OCI-LY7 (cell line): ENCODE measurements at regions of chr22 and their contacts with region 1.

Region 1: DNA sequence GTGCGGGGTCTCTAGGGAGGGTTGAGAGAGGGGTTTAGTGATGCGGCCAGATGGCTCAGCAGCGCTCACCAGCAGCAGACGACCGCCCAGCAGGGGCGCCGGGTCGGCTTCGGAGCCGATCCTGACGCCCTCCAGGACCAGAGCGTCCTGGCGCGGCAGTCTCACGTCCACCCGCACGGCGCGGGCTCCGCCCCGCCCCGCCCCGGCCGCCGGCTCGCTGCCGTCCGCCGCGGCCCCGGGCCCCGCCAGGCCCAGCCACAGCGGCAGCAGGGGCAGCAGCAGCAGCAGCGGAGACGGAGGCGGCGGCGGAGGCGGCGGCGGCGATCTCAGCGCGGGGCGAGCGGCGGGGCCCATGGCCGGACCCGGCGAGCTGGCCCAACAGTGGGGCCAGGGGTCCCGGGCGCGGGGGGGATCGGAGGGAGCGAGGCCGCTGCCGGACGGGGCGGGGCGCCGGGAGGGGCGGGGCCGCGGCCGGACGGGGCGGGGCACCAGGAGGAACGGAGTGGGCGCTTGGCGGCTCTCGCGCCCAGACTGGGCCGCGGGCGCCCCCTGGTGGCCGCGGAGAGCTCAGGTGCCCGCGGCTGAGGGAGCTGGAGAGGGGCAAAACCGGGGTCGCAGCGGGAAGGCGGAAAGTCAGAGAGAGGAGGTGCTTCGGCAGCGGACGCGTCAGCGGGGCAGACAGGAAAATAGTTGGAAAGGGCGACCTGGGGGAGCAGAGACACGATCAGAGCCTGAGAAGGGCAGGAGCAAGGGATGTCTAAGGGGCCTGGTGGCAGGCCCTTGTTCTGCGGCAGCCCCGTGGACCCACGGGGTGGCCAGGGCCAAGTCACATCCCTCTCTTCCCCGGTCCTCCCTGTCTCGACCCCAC is at the start of gene RNF215:
- DNase-seq: peak; percentile 86
- H3K4me3 ChIP-seq: peak within 1 kb of the TSS; percentile 66
- H3K27ac ChIP-seq: no peak within 1 kb of the TSS
- H3K4me1 ChIP-seq: peaks cover 23% of the 10 kb centered on the region
- CTCF ChIP-seq: peak; percentile 82
- total RNA-seq, gene RNF215: 6.9 and 8.0 TPM in 2 replicates

Region 2: GRCh38 chr22:30114361-30114760 is 272.8 kb before region 1 on chr22:
- CTCF ChIA-PET with region 1: no interaction called
- POLR2A ChIA-PET with region 1: interaction called, 3 read pairs
- intact Hi-C with region 1: loop called (anchors 5 kb)
- DNase-seq: no peak
- H3K4me3 ChIP-seq: no peak overlapping the region
- H3K27ac ChIP-seq: no peak overlapping the region
- H3K4me1 ChIP-seq: no peaks in the 10 kb centered on the region
- CTCF ChIP-seq: no peak

Region 3: DNA sequence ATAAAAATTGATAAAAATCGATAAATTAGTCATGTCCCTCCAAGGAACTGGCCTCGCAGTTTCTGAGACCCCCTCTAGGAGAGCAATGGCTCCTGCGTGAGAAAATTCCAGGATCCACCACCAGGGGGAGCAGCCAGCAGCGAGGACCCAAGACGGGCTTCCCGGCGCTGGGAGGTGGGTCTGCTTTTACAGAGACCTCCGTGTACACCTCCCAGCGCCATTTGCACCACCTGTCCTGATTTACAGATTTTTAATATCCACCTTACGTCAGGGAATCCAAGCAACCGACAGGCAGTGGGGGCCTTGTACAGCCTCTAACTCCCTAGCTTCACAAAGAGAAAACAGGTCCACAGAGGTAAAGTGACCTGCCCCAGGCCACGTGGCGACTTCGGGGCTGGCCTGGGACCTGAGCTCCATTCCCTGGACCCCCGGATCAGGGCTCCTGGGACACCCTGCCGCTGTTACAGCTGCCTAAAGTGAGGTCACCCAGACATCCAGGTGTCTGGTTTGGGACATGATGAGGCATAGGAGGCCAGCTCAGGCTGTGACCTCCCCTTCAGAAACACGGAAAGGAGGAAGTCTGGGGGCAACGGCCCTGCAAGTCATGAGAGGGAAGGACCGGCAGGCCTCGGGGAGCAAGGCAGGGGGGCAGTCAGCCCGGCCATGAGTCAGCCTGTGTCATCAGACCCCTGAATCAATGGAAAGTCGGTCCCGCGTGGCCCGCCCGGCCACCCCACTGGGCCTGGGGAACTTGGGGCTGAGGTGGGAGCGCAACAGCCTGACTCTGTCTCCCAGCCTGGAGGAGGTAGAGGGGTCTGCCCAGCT is 124.1 kb before region 1 on chr22:
- CTCF ChIA-PET with region 1: interaction called, 6 read pairs
- POLR2A ChIA-PET with region 1: no interaction called
- intact Hi-C with region 1: loop called (anchors 1 kb)
- DNase-seq: peak; percentile 80
- H3K4me3 ChIP-seq: no peak overlapping the region
- H3K27ac ChIP-seq: no peak overlapping the region
- H3K4me1 ChIP-seq: peaks cover 20% of the 10 kb centered on the region
- CTCF ChIP-seq: peak; percentile 96

Region 4: DNA sequence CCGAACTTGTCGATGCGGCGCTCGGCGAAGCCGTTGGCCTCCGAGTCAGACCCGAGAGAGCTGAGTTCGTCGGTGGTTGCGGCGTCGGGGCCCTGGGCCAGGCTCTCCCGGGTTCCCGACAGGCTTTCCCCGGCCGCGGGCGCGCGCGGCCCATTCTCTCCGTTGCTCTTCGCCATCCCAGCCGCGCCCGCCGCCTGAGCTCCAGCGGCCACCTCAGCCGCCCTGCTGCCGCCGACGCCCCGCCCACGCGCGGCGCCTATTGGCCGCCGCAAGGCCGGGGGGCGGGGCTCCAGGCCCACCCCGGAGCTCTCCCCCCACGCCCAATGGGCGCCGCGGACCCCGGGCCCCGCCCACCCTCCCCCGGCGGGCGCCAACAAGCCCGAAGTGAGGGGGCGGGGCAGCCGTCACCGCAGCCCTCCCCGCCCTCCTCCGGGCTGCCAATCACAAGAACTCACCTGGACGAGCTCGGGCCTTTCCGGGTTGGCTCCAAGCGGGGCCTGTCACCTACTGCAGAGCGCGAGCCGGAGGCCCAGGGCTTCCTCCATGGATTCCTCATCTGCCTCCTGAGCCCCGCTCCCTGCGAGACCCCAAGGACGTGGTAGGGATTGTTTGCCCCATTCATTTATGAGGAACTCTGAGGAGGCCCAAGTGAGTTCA is 60.4 kb before region 1 on chr22 and contains the start of gene TBC1D10A:
- CTCF ChIA-PET with region 1: no interaction called
- POLR2A ChIA-PET with region 1: interaction called, 3 read pairs
- intact Hi-C with region 1: loop called (anchors 2 kb)
- DNase-seq: peak; percentile 96
- H3K4me3 ChIP-seq: peak within 1 kb of the TSS; percentile 90
- H3K27ac ChIP-seq: peak within 1 kb of the TSS; percentile 33
- H3K4me1 ChIP-seq: peaks cover 33% of the 10 kb centered on the region
- CTCF ChIP-seq: no peak
- total RNA-seq, gene TBC1D10A: 15.1 and 15.9 TPM in 2 replicates

Region 5: DNA sequence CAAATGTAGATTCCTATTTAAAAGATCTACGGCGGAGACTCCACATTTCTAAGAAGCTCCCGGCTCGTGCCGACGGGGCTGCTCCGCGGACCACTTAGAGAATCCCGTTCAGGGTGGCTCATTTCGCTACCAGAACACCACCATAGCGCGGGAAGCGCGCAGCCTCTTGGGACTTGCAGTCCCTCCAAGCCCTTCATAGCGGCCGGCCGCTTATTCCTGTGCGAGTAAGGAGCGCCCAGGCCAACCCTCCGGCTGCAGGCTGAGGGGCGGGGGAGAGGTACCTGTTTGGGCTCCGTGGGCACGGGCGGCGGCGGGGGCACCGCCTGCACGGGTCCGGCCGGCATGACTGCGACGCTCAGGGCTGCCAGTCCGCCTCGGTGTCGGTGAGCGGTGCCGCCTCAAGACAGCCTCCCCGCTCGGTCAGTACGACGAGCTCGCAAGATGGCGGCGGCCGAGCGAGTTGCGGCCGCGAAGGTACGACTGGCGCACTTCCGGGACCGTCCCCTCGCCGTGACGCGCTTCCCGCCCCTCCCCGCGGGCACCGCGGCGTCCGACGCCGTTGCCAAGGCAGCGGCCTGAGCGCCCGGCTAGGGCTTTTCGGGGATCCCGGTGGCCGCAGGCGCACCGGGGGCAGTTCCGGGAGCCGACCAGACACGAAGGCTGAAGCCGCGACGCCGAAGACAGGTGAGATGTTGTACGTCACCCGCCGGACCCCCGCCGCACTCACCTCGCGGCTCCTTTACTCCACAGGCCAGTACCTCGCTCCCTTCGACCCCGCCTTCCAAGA is 30.6 kb before region 1 on chr22 and contains the starts of genes CCDC157 and SF3A1:
- CTCF ChIA-PET with region 1: no interaction called
- POLR2A ChIA-PET with region 1: interaction called, 3 read pairs
- intact Hi-C with region 1: loop called (anchors 1 kb)
- DNase-seq: peak; percentile 93
- H3K4me3 ChIP-seq: peak within 1 kb of the TSS; percentile 89
- H3K27ac ChIP-seq: peak within 1 kb of the TSS; percentile 62
- H3K4me1 ChIP-seq: peaks cover 23% of the 10 kb centered on the region
- CTCF ChIP-seq: no peak
- total RNA-seq, gene CCDC157: 3.4 and 4.7 TPM in 2 replicates
- total RNA-seq, gene SF3A1: 44.9 and 71.8 TPM in 2 replicates

Region 6: GRCh38 chr22:30485362-30485988 is 98.3 kb after region 1 on chr22:
- CTCF ChIA-PET with region 1: no interaction called
- POLR2A ChIA-PET with region 1: no interaction called
- intact Hi-C with region 1: loop called (anchors 2 kb)
- DNase-seq: peak; percentile 59
- H3K4me3 ChIP-seq: no peak overlapping the region
- H3K27ac ChIP-seq: no peak overlapping the region
- H3K4me1 ChIP-seq: no peaks in the 10 kb centered on the region
- CTCF ChIP-seq: peak; percentile 89

Region 7: GRCh38 chr22:30830907-30831306 is 443.7 kb after region 1 on chr22:
- CTCF ChIA-PET with region 1: no interaction called
- POLR2A ChIA-PET with region 1: no interaction called
- intact Hi-C with region 1: no loop called
- DNase-seq: no peak
- H3K4me3 ChIP-seq: no peak overlapping the region
- H3K27ac ChIP-seq: no peak overlapping the region
- H3K4me1 ChIP-seq: no peaks in the 10 kb centered on the region
- CTCF ChIP-seq: no peak